Psoas muscle (tissue), 8 donors: ENCODE measurements at regions of chr2 and their contacts with region 1.

Region 1: GRCh38 chr2:74999456-74999855 is 41.0 kb downstream of the POLE4 start:
- DNase-seq: no peak
- ATAC-seq: no peak
- H3K4me3 ChIP-seq: no peak overlapping the region
- H3K27ac ChIP-seq: no peak overlapping the region
- H3K4me1 ChIP-seq: no peaks in the 10 kb centered on the region
- H3K27me3 ChIP-seq: no peaks in the 10 kb centered on the region
- CTCF ChIP-seq: no peak

Region 2: DNA sequence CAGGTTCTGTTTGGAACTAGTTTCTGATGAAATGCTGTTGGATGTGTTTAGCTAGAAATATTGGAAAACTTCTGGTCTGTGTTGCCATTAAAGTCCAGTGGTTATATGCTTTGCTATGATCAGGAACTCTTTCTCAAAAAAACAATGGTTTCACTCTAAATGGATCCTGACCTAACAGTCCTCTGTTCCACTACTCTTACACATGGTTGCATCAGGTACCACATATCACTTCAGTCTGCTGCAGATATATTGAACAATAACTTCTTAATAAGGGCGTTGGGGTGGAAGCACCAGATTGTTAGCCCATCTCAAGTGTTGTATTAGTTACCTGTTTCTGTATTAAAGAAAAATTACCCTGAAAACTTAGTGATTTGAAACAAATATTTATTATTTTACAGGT is 1387.8 kb after region 1 on chr2:
- intact Hi-C with region 1: loop called in 1 of 2 experiments (anchors 5 kb)
- DNase-seq: no peak
- ATAC-seq: no peak
- H3K4me3 ChIP-seq: no peak overlapping the region
- H3K27ac ChIP-seq: no peak overlapping the region
- H3K4me1 ChIP-seq: no peaks in the 10 kb centered on the region
- H3K27me3 ChIP-seq: no peaks in the 10 kb centered on the region
- CTCF ChIP-seq: no peak